ENCODE measurements at regions of chr12 and their contacts with region 1.

Region 1: DNA sequence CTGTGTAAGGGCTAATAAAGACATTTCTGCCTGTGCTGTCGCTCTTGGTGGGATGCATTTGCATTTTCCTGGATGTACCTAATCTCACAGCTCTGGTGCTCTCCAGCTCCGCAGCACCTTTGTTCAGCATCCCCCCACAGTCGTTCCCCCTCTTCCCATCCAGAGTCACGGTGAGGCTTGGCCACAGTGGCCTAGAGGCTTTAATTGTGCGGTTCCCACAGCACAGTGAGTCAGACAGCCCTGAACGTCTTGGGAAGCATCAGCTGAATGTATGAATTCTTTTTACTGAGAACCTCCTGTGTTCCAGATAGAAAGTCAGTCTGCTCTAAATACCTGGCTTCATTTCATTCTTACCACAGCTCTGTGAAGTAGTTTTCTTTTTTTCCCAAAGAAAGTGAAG is 28.7 kb downstream of the MLXIP start:
- DNase-seq: no peak
- H3K4me3 Mint-ChIP-seq: no peak overlapping the region
- H3K27ac Mint-ChIP-seq: peak overlapping the region; percentile 65
- H3K4me1 Mint-ChIP-seq: peaks cover 79% of the 10 kb centered on the region
- H3K27me3 Mint-ChIP-seq: no peaks in the 10 kb centered on the region

Region 2: GRCh38 chr12:121038861-121039666 is 1068.2 kb before region 1 on chr12 and contains the start of gene OASL:
- CTCF ChIA-PET with region 1: no interaction called
- intact Hi-C with region 1: loop called (anchors 10 kb)
- DNase-seq: peak; percentile 55
- H3K4me3 Mint-ChIP-seq: peak within 1 kb of the TSS; percentile 75
- H3K27ac Mint-ChIP-seq: peak within 1 kb of the TSS; percentile 70
- H3K4me1 Mint-ChIP-seq: peaks cover 50% of the 10 kb centered on the region
- H3K27me3 Mint-ChIP-seq: peaks cover 8% of the 10 kb centered on the region
- total RNA-seq, gene OASL: 12.4 to 13.4 TPM

Region 3: DNA sequence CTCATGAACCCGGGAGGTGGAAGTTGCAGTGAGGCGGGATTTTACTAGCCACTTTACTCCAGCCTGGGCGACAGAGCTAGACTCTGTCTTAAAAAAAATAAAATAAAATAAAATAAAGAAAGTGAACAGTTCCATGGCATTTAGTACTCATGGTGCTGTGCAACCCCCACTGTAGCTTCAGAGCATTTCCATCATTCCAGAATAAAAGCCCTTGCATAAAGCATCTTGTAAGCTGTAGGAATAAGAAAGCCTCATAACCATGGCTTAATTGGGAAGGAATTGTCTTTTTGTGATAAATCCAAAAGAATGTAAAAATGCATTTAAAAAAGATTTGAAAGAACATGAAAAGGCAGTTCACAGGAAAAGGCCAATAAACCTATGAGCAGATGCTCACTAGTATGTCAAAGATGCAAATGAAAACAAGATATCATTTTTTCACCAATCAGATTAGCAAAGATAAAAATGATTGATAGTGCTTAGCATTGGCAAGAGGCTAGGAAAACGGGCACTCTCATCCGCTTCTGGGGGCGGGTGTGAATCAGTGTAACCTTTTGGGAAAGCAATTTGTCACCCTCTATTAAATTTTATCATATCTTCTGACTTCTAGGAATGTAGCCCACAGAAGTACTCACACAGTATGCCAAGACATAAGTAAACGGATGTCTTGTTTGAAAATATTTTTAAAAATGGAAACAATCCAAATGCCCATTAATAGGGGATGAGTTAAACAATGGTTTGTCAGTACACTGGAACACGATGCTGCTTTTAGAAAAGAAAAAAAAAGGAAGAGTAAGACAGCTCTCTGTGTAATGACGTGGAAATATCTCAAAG is 142.2 kb before region 1 on chr12:
- CTCF ChIA-PET with region 1: no interaction called
- intact Hi-C with region 1: no loop called
- DNase-seq: no peak
- H3K4me3 Mint-ChIP-seq: no peak overlapping the region
- H3K27ac Mint-ChIP-seq: no peak overlapping the region
- H3K4me1 Mint-ChIP-seq: no peaks in the 10 kb centered on the region
- H3K27me3 Mint-ChIP-seq: no peaks in the 10 kb centered on the region

Region 4: GRCh38 chr12:121992059-121992879 is 115.0 kb before region 1 on chr12:
- CTCF ChIA-PET with region 1: interaction called, 4 read pairs
- intact Hi-C with region 1: loop called (anchors 1 kb)
- DNase-seq: peak; percentile 89
- H3K4me3 Mint-ChIP-seq: peak overlapping the region; percentile 43
- H3K27ac Mint-ChIP-seq: peak overlapping the region; percentile 87
- H3K4me1 Mint-ChIP-seq: peaks cover 20% of the 10 kb centered on the region
- H3K27me3 Mint-ChIP-seq: no peaks in the 10 kb centered on the region

Region 5: DNA sequence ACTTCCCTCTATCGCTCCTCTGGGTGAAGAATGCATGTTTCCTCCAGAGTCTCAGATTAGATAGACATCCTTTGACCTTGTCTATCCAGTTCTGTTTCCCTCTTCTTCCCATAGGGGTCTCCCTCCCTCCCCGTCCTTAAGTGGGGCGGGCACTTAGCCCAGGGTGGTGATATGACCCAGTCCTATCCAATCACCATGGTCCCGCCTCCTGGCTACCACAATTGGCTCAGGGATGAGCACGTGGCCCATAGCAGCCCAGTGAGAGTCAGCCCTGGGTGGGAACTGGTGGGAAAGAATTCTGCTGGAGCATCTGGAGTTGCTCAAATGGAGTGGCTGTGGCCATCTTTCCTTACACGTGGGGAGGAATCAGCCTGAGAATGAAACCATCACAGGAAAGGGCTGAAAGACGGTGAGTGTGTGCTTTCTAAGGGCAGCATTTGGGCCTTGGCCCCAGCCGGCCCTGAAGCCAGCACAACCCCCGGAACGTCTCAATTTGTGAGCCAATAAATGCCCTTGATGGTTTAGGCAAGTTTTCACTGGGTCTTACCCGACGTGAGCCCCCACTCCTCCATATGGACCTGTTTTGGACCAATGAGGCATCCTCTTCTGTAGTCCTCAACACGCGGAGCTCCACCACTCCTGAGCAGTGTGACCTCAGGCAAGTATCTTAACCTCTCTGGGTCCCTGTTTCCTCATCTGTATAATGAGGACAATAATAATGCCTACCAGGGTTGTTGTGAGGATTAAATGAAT is 43.1 kb before region 1 on chr12:
- CTCF ChIA-PET with region 1: interaction called, 3 read pairs
- intact Hi-C with region 1: loop called (anchors 5 kb)
- DNase-seq: peak; percentile 61
- H3K4me3 Mint-ChIP-seq: peak overlapping the region; percentile 14
- H3K27ac Mint-ChIP-seq: no peak overlapping the region
- H3K4me1 Mint-ChIP-seq: peaks cover 19% of the 10 kb centered on the region
- H3K27me3 Mint-ChIP-seq: no peaks in the 10 kb centered on the region

Region 6: DNA sequence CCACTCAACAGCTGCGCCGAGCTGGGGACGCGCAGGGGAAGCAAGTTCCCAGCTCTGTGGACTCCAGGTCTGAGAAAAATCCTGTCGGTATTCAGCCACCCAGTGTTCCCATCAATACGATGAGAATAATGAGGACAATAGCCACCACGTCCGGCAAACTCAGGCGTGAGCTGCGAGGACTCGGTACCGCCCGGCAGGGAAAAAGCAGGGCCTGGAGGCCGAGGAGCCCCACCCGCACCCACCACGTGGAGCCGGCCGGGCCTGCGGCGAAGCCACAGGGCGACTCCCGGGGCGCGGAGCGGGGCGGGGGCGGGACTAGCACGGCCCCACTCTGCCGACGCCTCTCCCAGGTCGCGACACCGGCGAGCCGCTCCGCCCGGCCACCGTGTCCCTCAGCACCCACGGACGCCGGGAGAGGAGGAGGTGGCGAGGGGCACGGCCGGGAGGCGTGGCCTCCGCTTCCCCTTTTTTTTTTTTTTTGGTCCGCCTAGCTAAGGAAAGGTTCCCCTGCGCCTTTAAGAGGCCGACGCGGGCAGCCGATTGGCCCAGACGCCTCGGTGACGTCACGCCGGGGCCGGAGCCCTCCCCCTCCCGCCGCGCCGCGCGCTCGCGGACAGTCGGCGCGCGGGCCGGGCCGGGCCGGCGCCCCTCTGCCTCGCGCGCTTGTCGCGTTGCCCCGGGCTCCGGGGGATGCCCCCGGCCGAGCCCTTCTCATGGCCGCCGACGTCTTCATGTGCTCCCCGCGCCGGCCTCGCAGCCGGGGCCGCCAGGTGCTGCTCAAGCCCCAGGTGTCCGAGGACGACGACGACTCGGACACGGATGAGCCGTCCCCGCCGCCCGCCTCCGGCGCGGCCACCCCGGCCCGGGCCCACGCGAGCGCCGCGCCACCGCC is 28.9 kb before region 1 on chr12 and contains the start of gene MLXIP:
- CTCF ChIA-PET with region 1: interaction called, 27 read pairs
- intact Hi-C with region 1: loop called (anchors 1 kb)
- DNase-seq: peak; percentile 91
- H3K4me3 Mint-ChIP-seq: peak within 1 kb of the TSS; percentile 85
- H3K27ac Mint-ChIP-seq: peak within 1 kb of the TSS; percentile 51
- H3K4me1 Mint-ChIP-seq: peaks cover 47% of the 10 kb centered on the region
- H3K27me3 Mint-ChIP-seq: no peaks in the 10 kb centered on the region
- total RNA-seq, gene MLXIP: 18.8 to 22.0 TPM

Region 7: GRCh38 chr12:122437656-122438121 is 330.4 kb after region 1 on chr12:
- CTCF ChIA-PET with region 1: no interaction called
- intact Hi-C with region 1: no loop called
- DNase-seq: no peak
- H3K4me3 Mint-ChIP-seq: no peak overlapping the region
- H3K27ac Mint-ChIP-seq: no peak overlapping the region
- H3K4me1 Mint-ChIP-seq: no peaks in the 10 kb centered on the region
- H3K27me3 Mint-ChIP-seq: no peaks in the 10 kb centered on the region